Activated naive CD4-positive, alpha-beta T cell treated with anti-CD3 and anti-CD28 coated beads for 36 hours (primary cell): ENCODE measurements at regions of chr17 and their contacts with region 1.

Region 1: DNA sequence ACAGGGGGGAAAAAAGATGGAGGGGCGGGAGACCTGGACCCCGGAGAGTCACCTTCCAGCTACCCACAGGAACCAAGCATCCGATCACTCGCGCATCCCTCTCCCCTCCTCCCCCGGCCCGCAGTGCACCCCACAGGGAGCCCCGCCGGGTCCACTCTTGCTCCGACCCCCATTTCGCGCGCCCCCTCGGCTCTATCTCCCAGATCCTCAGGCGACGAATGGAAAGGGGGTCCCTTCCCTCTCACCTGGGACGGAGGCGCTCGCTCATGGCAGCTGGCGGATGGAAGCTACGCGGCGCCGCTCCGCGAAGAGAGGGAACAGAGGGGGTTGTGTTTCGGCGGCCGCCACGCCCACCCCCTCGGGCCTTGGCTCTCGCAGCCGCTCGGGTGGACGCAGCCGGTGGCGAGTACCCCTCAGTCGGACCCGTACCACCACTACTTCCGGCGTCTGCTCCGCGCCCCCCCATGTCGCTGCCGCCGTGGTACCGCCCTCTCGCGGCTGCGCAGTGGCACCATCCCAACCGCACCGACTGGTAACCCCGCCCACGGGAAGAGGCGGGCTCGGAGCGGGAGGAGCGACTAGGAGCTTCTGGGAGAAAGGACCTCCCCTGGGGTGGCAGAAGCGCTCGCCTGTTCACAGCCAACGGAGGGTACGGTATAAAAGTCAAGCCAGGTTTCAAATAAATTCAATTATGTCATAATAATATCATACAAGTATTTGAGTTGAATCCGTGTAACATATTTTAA is 29.7 kb downstream of the CPSF4L start:
- DNase-seq: peak; percentile 97
- H3K4me3 Mint-ChIP-seq: peak overlapping the region; percentile 96
- H3K27ac Mint-ChIP-seq: peak overlapping the region; percentile 94
- H3K4me1 Mint-ChIP-seq: peaks cover 64% of the 10 kb centered on the region
- H3K27me3 Mint-ChIP-seq: no peaks in the 10 kb centered on the region

Region 2: GRCh38 chr17:72715906-72716572 is 516.0 kb before region 1 on chr17:
- CTCF ChIA-PET with region 1: no interaction called
- intact Hi-C with region 1: loop called (anchors 2 kb)
- DNase-seq: no peak
- H3K4me3 Mint-ChIP-seq: no peak overlapping the region
- H3K27ac Mint-ChIP-seq: no peak overlapping the region
- H3K4me1 Mint-ChIP-seq: peaks cover 20% of the 10 kb centered on the region
- H3K27me3 Mint-ChIP-seq: no peaks in the 10 kb centered on the region

Region 3: DNA sequence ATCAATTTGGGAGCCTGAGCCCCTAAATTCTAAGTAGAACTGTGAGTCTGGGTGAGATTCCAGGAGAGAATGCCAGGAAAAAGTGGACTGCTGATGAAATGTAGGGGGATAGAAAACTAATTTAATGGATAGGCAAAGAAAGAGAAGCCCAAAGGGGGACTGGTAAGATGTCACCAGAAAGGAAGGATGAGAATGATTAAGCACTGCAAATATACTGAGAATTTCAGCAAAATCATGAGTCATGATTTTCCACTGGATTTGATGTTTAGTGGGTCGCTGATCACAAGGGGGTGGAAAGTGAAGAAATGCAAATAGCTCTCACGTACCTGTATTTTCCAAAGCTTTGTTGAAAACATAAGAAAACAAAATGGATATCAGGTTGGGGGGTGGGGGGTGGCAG is 341.3 kb before region 1 on chr17:
- CTCF ChIA-PET with region 1: no interaction called
- intact Hi-C with region 1: no loop called
- DNase-seq: no peak
- H3K4me3 Mint-ChIP-seq: no peak overlapping the region
- H3K27ac Mint-ChIP-seq: peak overlapping the region; percentile 40
- H3K4me1 Mint-ChIP-seq: peaks cover 20% of the 10 kb centered on the region
- H3K27me3 Mint-ChIP-seq: no peaks in the 10 kb centered on the region

Region 4: DNA sequence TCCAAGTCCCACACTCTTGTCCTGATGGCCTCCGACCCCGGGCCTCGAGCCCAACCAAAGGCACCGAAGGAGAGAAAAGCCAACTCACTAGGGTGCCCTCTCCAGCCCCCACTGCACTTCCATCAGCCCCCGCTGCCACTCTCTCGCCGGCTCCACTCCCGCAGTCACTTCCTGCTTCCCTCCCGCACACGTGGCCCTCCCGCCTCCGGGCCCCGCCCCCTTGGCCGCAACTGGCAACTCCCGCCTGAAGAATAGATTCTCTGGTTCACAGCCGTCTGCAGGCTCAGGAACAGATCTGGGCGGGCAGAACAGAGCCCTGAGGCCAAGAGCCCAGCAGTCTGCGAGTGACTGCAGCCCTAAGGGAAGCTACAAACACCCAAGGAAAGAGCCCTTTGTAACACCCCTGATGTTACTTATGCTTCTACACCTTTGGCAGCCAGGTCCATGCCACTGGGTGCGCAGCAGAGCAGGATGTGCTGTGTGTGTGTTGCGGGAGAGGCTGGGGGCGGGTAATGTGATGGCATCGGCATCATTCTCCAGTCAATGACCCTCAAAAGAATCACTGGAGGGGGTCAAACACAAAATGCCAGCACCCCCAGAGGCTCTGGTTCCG is 139.4 kb before region 1 on chr17 and contains the start of gene SLC39A11:
- CTCF ChIA-PET with region 1: no interaction called
- intact Hi-C with region 1: loop called (anchors 1 kb)
- DNase-seq: peak; percentile 92
- H3K4me3 Mint-ChIP-seq: peak within 1 kb of the TSS; percentile 99
- H3K27ac Mint-ChIP-seq: peak within 1 kb of the TSS; percentile 84
- H3K4me1 Mint-ChIP-seq: peaks cover 28% of the 10 kb centered on the region
- H3K27me3 Mint-ChIP-seq: no peaks in the 10 kb centered on the region
- total RNA-seq, gene SLC39A11: 14.0 to 16.4 TPM

Region 5: GRCh38 chr17:73118951-73119391 is 113.0 kb before region 1 on chr17:
- CTCF ChIA-PET with region 1: no interaction called
- intact Hi-C with region 1: no loop called
- DNase-seq: no peak
- H3K4me3 Mint-ChIP-seq: no peak overlapping the region
- H3K27ac Mint-ChIP-seq: no peak overlapping the region
- H3K4me1 Mint-ChIP-seq: no peaks in the 10 kb centered on the region
- H3K27me3 Mint-ChIP-seq: no peaks in the 10 kb centered on the region

Region 6: DNA sequence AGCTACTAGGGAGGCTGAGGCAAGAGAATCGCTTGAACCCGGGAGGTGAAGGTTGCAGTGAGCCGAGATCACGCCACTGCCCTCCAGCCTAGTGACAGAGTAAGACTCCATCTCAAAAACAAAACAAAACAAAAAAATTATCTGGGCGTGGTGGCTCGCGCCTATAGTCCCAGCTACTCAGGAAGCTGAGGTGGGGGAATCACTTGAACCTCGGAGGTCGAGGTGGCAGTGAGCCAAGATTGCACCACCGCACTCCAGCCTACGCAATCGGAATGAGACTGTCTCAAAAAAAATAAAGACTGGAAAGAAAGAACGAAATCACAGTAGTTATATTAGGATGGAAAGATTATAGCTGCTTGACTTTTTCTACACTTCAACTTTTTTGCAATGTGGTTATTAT is 20.3 kb before region 1 on chr17:
- CTCF ChIA-PET with region 1: interaction called, 6 read pairs
- intact Hi-C with region 1: loop called (anchors 1 kb)
- DNase-seq: peak; percentile 66
- H3K4me3 Mint-ChIP-seq: peak overlapping the region; percentile 52
- H3K27ac Mint-ChIP-seq: peak overlapping the region; percentile 59
- H3K4me1 Mint-ChIP-seq: peaks cover 43% of the 10 kb centered on the region
- H3K27me3 Mint-ChIP-seq: no peaks in the 10 kb centered on the region

Region 7: DNA sequence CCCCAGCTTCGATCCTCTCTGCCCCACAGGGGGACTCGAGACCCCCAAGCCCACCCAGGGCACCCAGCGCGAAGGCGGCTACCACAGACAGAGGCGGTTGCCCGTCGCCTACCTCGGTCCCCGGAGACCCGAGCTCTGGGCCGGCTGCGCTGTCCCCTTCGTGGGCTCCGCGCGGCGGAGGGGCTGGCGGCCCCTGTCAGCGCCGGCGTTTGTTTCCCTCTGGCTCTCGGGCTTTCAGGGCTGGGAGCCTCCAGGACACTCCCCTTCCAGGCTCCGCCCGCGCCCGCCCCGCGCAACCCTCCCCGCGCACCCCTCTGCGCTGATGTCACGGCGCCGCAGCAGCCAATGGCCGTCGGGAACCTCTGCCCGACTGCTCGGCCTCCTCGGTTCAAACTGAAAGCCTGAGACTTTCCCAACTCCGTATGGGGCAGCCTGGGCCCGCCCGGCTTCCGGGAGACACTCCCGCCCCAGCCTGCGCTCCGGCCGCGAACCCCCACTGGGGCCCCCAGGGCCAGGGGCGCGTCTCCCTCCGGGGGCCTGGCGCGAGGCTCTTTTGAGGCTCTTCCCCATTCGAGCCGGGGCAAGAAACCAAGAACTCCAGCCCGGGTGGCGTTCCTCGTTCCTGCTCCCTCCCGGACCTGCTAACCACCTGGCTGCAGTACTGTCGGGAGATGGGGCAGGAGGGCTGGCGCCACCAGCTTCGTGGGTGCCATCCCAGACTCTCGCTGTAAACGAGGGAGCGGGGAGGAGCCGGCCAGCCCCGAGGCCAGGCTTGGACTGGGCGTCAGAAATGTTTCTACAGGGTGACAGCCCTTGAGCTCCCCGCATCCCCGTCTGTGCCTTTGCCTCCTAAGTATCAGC is 80.0 kb after region 1 on chr17 and contains the start of gene CDC42EP4:
- CTCF ChIA-PET with region 1: interaction called, 11 read pairs
- intact Hi-C with region 1: loop called (anchors 1 kb)
- DNase-seq: peak; percentile 91
- H3K4me3 Mint-ChIP-seq: peak within 1 kb of the TSS; percentile 80
- H3K27ac Mint-ChIP-seq: no peak within 1 kb of the TSS
- H3K4me1 Mint-ChIP-seq: peaks cover 10% of the 10 kb centered on the region
- H3K27me3 Mint-ChIP-seq: no peaks in the 10 kb centered on the region
- total RNA-seq, gene CDC42EP4: 1.7 to 2.1 TPM

Region 8: DNA sequence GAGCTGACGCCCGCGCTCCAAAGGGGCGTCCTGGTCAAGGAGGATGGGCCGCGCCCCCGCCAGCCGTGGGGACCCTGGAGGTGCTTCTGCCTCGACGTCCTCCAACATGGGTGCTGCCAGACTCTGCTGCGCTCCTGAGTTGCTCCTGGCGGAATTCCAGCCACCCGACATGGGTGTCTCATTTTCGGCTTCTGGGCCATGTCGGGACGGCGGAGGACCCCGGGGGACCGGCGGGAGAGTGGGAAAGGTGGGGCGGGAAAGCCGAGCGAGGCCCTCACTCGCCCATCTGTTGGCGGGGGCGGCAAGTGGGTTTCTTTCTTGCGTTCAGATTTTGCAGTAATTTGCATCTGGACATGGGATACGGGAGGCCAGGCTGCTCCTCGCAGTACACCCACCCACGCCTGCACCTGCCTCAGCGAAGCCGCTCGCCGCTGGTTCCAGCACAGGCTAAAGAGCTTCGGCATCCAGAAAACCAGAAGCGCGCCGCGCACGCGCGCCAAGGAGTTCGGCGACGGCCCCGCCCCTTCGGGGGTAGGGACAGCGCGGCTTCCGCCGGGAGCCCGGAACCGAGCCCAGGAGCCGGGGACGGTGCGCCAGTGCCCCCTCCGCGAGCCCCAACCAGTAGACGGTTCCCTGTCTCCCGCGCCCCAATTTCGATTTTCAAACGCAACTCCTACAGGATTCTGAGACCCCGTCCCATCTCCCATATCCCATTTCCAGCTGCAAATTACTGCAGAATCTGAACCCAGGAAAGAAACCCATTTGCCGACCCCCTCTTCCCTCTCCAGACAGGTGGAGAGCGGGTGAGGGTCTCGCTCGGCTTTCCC is 1877.6 kb after region 1 on chr17 and contains the start of gene ARMC7:
- CTCF ChIA-PET with region 1: no interaction called
- intact Hi-C with region 1: no loop called
- DNase-seq: peak; percentile 93
- H3K4me3 Mint-ChIP-seq: peak within 1 kb of the TSS; percentile 90
- H3K27ac Mint-ChIP-seq: peak within 1 kb of the TSS; percentile 91
- H3K4me1 Mint-ChIP-seq: peaks cover 29% of the 10 kb centered on the region
- H3K27me3 Mint-ChIP-seq: no peaks in the 10 kb centered on the region
- total RNA-seq, gene ARMC7: 3.8 to 4.9 TPM